Tibial artery (tissue), 4 donors: ENCODE measurements at regions of chr12 and their contacts with region 1.

Region 1: GRCh38 chr12:569803-570434 is 93.3 kb downstream of the NINJ2 start:
- DNase-seq: peak; percentile 87 to 92
- H3K4me3 ChIP-seq: peak overlapping the region; percentile 67 to 79
- H3K27ac ChIP-seq: peak overlapping the region; percentile 87 to 94
- H3K4me1 ChIP-seq: peaks cover 0 to 30% (median 23%) of the 10 kb centered on the region in 4 donors
- H3K27me3 ChIP-seq: no peaks in the 10 kb centered on the region
- CTCF ChIP-seq: peak; percentile 90 to 97

Region 2: GRCh38 chr12:642633-643474 is 72.9 kb after region 1 on chr12:
- intact Hi-C with region 1: loop called (anchors 5 kb)
- DNase-seq: peak; percentile 62 to 87
- H3K4me3 ChIP-seq: peak overlapping the region; percentile 65 to 74
- H3K27ac ChIP-seq: peak overlapping the region; percentile 93 to 99
- H3K4me1 ChIP-seq: peaks cover 0 to 53% (median 35%) of the 10 kb centered on the region in 4 donors
- H3K27me3 ChIP-seq: no peaks in the 10 kb centered on the region
- CTCF ChIP-seq: peak; percentile 15 to 40

Region 3: DNA sequence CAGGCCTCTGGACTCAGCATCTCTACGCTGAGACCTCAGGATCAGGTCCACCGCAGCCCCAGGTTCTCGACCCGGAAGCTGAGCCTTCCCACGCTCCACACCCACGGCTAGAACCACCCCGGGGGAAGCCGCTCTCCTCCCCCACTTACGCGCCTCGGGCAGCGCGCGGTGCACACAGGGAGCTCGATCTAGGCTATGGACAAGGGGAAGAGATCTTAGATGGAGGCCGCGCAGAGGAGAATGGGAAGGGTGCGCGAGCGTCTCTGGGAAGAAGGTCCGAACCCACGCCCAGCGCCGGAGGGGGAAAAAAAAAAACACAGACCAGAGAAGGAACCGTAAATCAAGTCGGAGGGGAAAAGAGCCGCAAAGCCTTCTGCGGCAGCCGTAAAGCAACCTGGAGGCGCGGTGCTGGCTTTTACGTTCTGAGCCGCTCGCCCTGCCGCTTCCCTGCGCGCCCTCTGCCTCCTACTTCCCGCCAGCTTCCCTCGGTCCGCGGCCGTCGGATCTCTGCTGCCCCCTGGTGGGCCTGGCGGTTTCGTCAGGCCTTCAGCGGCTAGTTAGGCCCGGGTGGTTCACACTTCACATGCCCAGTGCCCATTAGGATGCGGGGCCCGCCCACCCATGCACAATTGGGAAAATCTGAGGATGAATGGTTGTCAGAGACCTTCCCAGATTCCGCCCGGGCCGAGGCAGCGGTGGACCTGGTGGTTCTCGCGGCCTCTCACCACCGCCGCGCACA is 379.7 kb after region 1 on chr12 and contains the start of gene RAD52:
- intact Hi-C with region 1: loop called (anchors 5 kb)
- DNase-seq: peak; percentile 96 to 99
- H3K4me3 ChIP-seq: peak within 1 kb of the TSS; percentile 84
- H3K27ac ChIP-seq: peak within 1 kb of the TSS; percentile 85 to 90
- H3K4me1 ChIP-seq: peaks cover 0 to 27% (median 9%) of the 10 kb centered on the region in 4 donors
- H3K27me3 ChIP-seq: no peaks in the 10 kb centered on the region
- CTCF ChIP-seq: peak; percentile 96 to 99

Region 4: DNA sequence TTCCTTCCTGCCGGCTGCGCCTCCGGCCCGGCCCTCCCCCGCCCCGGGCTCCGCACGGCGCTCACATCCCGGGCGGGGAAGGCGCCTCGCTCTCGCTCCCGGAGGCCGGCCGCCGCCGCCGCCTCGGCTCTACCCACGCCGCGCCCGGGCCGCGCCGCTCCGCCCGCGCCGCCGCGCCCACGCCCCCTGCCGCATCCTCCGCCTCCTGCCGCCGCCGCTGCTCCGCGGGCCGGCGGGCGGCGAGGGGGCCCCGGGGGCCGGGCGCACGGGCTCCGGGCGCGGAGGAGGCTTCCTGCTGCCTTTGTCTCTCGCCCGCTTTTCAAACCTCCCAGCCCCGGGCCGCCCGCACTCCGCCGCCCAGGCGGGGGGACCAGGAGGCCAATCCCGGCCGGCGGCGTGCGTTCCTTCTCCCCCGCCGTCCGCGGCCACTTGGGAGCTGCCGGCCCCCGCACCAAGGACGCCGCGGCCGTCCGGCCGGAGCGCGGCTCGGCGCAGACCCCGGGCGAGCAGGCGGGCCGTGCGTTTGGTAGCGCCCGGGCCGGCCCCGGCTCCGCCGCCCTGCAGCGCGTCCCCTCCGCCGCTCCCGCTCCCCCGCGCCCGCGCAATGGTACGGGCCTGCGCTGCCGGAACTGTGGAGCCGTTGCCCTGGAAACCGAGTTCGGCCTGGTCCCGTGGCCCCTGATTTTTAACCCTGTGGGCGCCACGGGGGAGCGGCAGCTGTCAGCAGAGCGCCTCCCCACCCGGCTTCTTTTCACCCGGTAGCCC is 1024.5 kb after region 1 on chr12 and contains the start of gene FBXL14:
- intact Hi-C with region 1: loop called (anchors 10 kb)
- DNase-seq: peak; percentile 87 to 93
- H3K4me3 ChIP-seq: peak within 1 kb of the TSS; percentile 84 to 96
- H3K27ac ChIP-seq: peak within 1 kb of the TSS; percentile 89 to 93
- H3K4me1 ChIP-seq: peaks cover 0 to 49% (median 27%) of the 10 kb centered on the region in 4 donors
- H3K27me3 ChIP-seq: no peaks in the 10 kb centered on the region
- CTCF ChIP-seq: peak in 1 of 2 experiments; percentile 9